Ascending aorta (tissue), 2 donors: ENCODE measurements at regions of chr16 and their contacts with region 1.

Region 1: GRCh38 chr16:49834531-49835151 is 21.3 kb downstream of the ZNF423 start:
- DNase-seq: peak; percentile 54 to 88
- H3K4me3 ChIP-seq: peak overlapping the region in 1 of 2 donors; percentile 23
- H3K27ac ChIP-seq: peak overlapping the region; percentile 86 to 90
- H3K4me1 ChIP-seq: peaks cover 48 to 74% of the 10 kb centered on the region in 2 donors
- H3K27me3 ChIP-seq: no peaks in the 10 kb centered on the region
- CTCF ChIP-seq: no peak

Region 2: DNA sequence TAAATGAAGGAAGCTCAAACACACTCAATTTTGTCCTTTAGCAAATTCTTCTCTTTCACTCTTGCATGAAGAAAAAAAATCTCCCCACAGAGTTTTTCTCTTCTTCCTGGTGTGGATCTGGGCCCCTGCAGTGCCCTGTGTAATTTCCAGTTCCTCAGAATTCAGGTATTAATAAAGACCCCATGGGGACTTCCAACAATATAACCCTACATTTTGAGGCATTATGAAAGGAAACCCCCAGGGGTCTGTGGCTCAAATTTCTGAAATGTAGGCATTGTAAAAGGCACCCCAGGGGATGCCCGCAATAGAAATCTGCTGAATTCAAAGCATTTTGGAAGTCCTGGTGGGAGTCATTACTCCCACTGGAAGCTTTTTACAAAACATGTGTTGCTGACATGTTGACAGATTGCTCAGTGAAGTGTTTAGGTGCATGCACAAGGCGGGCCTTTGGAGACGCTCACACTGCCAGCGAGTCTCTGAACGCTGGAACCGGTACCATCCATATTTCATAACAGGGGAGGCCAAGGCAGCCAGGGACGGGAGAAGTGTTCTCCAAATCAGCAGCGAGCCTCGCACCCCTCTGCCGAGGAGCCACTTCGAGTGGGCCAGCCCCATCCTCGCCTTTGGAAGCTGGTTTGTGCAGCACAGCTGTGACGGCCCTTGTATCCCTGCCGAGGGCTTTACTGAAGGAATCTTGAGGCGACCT is 132.7 kb before region 1 on chr16:
- intact Hi-C with region 1: loop called (anchors 5 kb)
- DNase-seq: peak; percentile 18 to 80
- H3K4me3 ChIP-seq: peak overlapping the region in 1 of 2 donors; percentile 39
- H3K27ac ChIP-seq: peak overlapping the region; percentile 88 to 89
- H3K4me1 ChIP-seq: peaks cover 7 to 25% of the 10 kb centered on the region in 2 donors
- H3K27me3 ChIP-seq: no peaks in the 10 kb centered on the region
- CTCF ChIP-seq: no peak

Region 3: GRCh38 chr16:49788572-49788971 is 46.1 kb before region 1 on chr16:
- intact Hi-C with region 1: loop called (anchors 5 kb)
- DNase-seq: peak in 1 of 2 donors; percentile 68
- H3K4me3 ChIP-seq: no peak overlapping the region
- H3K27ac ChIP-seq: peak overlapping the region; percentile 76 to 78
- H3K4me1 ChIP-seq: peaks cover 0 to 19% of the 10 kb centered on the region in 2 donors
- H3K27me3 ChIP-seq: no peaks in the 10 kb centered on the region
- CTCF ChIP-seq: no peak

Region 4: GRCh38 chr16:49961089-49961488 is 126.4 kb after region 1 on chr16:
- intact Hi-C with region 1: no loop called
- DNase-seq: no peak
- H3K4me3 ChIP-seq: no peak overlapping the region
- H3K27ac ChIP-seq: no peak overlapping the region
- H3K4me1 ChIP-seq: no peaks in the 10 kb centered on the region
- H3K27me3 ChIP-seq: no peaks in the 10 kb centered on the region
- CTCF ChIP-seq: no peak

Region 5: DNA sequence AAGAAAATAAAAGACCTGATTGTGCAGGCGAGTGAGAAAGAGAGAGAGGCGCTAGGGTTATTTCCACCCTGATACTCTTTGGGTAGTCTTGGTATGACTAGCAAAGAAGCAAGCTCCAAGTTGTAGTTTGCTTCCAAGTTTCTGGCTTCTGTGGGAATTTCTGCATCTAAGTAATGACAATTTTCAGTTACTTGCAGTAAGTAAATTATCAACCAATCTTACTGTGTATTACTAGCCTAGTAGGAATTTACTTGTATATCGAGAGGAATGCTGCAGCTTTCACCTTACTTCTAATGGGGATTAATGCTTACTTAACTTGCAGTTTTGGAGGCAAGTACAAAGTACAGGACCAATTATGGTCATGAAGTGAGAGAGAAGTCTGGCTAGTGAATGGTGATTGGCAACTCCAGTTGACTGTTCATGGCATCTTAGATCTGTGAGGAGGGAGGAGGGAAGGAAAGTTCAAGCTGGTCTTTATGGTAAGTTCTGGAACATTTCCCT is 350.4 kb after region 1 on chr16:
- intact Hi-C with region 1: loop called (anchors 10 kb)
- DNase-seq: no peak
- H3K4me3 ChIP-seq: no peak overlapping the region
- H3K27ac ChIP-seq: peak overlapping the region; percentile 6 to 54
- H3K4me1 ChIP-seq: peaks cover 4 to 42% of the 10 kb centered on the region in 2 donors
- H3K27me3 ChIP-seq: no peaks in the 10 kb centered on the region
- CTCF ChIP-seq: no peak

Region 6: GRCh38 chr16:50741808-50742575 is 907.4 kb after region 1 on chr16 and contains the start of gene CYLD:
- intact Hi-C with region 1: loop called (anchors 10 kb)
- DNase-seq: peak; percentile 99 to 100
- H3K4me3 ChIP-seq: peak within 1 kb of the TSS; percentile 69 to 93
- H3K27ac ChIP-seq: peak within 1 kb of the TSS; percentile 86
- H3K4me1 ChIP-seq: peaks cover 0 to 12% of the 10 kb centered on the region in 2 donors
- H3K27me3 ChIP-seq: no peaks in the 10 kb centered on the region
- CTCF ChIP-seq: no peak
- total RNA-seq, gene CYLD: 33.2 TPM